ENCODE measurements at regions of chr12 and their contacts with region 1.

Region 1: GRCh38 chr12:121060149-121061001 is 21.3 kb upstream of the OASL start:
- DNase-seq: peak; percentile 81
- H3K4me3 Mint-ChIP-seq: peak overlapping the region; percentile 77
- H3K27ac Mint-ChIP-seq: peak overlapping the region; percentile 98
- H3K4me1 Mint-ChIP-seq: peaks cover 40% of the 10 kb centered on the region
- H3K27me3 Mint-ChIP-seq: peaks cover 20% of the 10 kb centered on the region

Region 2: DNA sequence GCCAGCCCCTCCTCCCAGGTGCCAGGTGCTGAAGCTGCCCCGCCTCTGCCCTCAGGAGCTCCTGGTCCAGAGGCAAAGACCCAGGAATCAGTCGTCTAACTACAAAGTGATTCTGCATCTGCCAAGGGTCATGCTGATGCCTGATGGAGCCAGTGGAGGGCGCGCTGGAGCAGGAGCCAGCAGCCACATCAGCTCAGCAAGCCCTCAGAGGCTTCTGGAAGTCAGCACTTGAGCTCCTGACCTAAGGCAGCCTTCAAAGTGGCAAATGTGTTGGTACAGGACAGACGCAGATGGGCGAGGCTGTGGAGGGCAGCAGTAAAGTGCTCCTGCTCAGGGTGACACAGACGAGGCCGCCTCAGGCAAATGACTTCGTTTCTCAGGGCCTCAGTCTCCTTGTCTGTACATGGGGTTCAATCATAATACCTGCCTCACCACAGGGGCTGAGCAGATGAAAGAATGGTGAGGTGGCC is 55.0 kb before region 1 on chr12:
- CTCF ChIA-PET with region 1: interaction called, 59 read pairs
- DNase-seq: peak; percentile 72
- H3K4me3 Mint-ChIP-seq: no peak overlapping the region
- H3K27ac Mint-ChIP-seq: no peak overlapping the region
- H3K4me1 Mint-ChIP-seq: peaks cover 3% of the 10 kb centered on the region
- H3K27me3 Mint-ChIP-seq: no peaks in the 10 kb centered on the region

Region 3: GRCh38 chr12:121038861-121039666 is 21.3 kb before region 1 on chr12 and contains the start of gene OASL:
- CTCF ChIA-PET with region 1: interaction called, 32 read pairs
- DNase-seq: peak; percentile 69
- H3K4me3 Mint-ChIP-seq: peak within 1 kb of the TSS; percentile 92
- H3K27ac Mint-ChIP-seq: peak within 1 kb of the TSS; percentile 91
- H3K4me1 Mint-ChIP-seq: peaks cover 52% of the 10 kb centered on the region
- H3K27me3 Mint-ChIP-seq: peaks cover 30% of the 10 kb centered on the region

Region 4: DNA sequence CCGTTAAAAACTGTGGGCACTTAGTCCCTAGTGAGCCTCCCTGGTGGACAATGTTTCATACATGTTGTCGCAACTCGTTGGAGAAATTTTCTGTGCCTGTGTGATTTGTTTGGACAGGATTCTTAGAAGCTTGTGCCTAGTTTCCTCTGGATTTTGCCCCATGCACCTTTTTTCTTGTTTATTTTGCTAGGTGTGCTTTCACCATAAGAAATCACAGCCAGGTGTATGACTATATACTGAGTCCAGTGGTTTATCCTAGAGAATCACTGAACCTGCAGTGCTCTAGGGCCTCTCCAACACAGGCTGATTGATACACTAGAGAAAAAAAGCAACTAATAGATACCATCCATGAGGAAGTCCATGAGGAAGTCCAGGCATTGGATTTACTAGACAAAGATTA is 11.8 kb after region 1 on chr12:
- CTCF ChIA-PET with region 1: interaction called, 10 read pairs
- DNase-seq: no peak
- H3K4me3 Mint-ChIP-seq: no peak overlapping the region
- H3K27ac Mint-ChIP-seq: no peak overlapping the region
- H3K4me1 Mint-ChIP-seq: no peaks in the 10 kb centered on the region
- H3K27me3 Mint-ChIP-seq: peaks cover 27% of the 10 kb centered on the region

Region 5: DNA sequence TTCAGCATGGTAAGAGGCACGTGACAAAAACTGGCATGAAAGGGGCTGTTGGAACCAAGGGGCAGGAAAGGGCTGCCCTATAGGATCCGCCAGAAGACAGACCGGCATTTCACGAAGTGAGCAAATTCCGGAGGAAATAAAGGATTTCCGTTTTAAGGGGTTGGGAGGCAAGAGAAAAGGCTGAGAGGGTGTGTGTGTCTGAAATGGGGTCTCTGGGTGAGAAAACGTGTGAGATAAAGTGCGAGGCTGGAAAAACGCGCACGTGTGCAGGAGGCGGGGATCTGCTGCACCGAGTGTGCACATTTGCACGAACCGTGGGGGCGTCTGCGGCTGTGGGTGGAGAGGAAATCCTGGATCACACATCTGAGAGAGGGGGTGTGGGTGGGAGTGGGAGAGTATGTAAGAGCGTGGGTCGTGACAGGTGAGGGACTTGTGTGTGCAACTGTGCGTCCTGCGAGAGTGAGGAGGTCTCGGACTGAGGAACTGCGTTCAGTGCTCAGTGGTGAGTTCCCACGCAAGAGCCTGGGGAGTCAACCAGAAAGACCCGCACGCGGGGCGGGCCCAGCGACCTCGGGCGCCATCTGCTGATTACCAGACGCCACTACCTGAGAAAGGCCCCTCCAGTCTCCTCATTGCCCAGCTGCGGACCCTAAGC is 35.3 kb after region 1 on chr12:
- CTCF ChIA-PET with region 1: interaction called, 45 read pairs
- DNase-seq: peak; percentile 84
- H3K4me3 Mint-ChIP-seq: peak overlapping the region; percentile 74
- H3K27ac Mint-ChIP-seq: peak overlapping the region; percentile 54
- H3K4me1 Mint-ChIP-seq: peaks cover 52% of the 10 kb centered on the region
- H3K27me3 Mint-ChIP-seq: peaks cover 33% of the 10 kb centered on the region

Region 6: GRCh38 chr12:121110211-121110940 is 50.0 kb after region 1 on chr12:
- CTCF ChIA-PET with region 1: interaction called, 12 read pairs
- DNase-seq: peak; percentile 76
- H3K4me3 Mint-ChIP-seq: no peak overlapping the region
- H3K27ac Mint-ChIP-seq: no peak overlapping the region
- H3K4me1 Mint-ChIP-seq: peaks cover 8% of the 10 kb centered on the region
- H3K27me3 Mint-ChIP-seq: peaks cover 15% of the 10 kb centered on the region

Measured in activated naive CD4-positive, alpha-beta T cell treated with anti-CD3 and anti-CD28 coated beads, Interleukin-2, amount 10 ng/mL, durations not matched to agents 7 days and 5 days (primary cell).